ENCODE measurements at regions of chr12 and their contacts with region 1.

Region 1: DNA sequence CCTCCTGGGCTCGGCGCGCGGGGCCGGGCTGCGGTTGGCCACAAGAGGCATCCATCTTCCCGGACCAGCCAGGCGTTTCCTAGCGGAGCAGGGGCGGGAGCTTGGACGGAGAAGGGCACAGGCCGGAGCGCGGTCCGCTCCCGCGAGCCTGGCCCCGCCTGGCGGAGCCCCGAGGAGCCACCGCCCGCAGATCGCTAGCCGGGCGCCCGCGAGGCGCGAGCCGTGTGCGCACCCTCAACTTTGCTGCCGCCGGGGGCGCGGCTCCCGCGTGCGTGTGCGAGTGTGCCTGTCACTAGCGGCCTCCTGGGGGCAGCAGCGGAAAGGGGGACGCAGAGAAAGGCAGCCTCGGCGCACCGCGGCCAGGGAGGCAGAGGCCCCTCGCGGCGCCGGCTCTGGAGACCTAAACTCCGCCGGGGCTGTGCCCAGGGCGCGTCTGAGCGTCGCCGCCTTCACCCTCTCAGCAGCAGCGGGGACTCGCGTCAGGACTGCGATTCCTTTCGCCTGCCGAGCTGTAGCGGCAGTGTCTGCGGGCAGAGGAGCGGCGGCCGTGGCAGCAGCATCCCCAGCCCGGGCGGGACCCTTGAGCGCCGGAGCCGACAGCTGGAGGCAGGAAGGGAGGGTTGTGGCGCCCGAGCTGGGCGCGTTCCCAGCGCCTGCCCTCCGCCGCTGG is 644 bp upstream of the SRGAP1 start:
- DNase-seq: peak; percentile 75 to 96 (median 93)

Region 2: GRCh38 chr12:64019118-64019517 is 175.3 kb after region 1 on chr12:
- intact Hi-C with region 1: no loop called
- DNase-seq: no peak

Region 3: GRCh38 chr12:64039281-64039871 is 195.5 kb after region 1 on chr12:
- intact Hi-C with region 1: loop called (anchors 10 kb)
- DNase-seq: peak in 1 of 42 donors; percentile 14

Region 4: DNA sequence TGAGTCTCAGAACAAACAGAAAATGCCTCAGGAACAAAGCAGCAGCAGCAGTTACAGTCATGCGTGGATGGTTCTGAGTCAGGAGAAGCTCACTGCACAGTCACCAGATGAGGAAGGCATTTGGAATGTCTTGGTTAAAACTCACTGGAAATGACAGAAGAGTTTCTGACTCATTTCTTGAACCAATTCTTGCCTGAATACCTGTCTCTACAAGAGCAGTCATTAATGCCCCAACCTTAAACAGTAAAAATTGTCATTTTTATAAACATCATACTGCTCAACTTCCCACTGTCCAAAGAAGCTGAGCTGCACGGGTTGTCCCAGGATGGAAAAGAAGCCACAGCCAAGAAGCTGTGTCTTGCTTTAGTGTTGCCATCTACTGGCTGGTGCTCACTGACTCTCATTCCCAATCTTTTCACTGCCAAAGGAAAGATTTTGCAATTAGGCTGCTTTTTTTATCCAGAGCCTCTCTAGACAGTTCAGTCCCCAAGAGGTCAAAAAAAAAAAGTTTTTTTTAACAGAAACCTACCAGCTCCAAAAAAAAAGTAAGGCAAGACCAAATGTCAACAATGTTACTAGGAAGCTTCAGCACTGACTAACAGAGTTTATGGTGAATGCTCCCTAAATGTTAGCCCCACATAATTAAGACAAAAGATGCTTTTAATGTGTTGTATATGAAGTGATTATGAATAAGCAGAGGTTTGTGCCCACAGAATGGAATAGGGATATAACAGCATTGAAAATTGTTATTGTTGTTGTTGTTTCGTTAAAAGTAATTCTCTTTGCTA is 337.8 kb after region 1 on chr12:
- intact Hi-C with region 1: loop called (anchors 5 kb)
- DNase-seq: peak in 40 of 42 donors; percentile 34 to 84 (median 66)

Region 5: DNA sequence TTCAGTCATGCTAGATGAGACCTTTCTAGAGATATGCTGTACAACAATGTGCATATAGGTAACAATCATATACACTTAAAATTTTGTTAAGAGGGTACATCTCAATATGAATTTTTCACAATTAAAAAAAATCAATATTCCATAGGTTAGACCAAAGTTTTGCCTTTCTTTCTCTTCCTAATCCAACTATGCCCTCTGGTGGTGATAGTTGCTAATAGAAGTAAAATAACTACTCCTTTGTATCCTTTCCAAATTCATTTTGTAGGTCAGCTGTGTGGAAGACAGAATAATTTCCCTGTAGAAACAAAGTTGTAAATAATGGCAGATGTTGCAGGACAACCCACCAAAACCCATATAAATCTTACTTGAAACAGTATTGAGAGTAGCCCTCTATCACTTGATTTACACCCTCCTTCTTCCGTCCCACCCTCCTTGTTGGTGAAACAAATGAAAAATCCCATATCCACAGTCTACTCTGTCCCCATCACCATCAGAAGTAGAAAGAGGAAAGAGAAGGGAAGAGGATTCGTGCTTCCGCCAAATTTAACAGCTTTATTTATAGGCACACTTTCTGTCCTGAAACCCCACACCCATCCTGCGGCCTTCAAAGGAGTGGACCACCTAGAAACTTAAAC is 412.4 kb after region 1 on chr12:
- intact Hi-C with region 1: loop called (anchors 5 kb)
- DNase-seq: peak in 5 of 42 donors; percentile 25 to 65 (median 41)

Region 6: GRCh38 chr12:64403707-64404469 is 560.0 kb after region 1 on chr12 and contains the start of gene XPOT:
- intact Hi-C with region 1: loop called (anchors 10 kb)
- DNase-seq: peak; percentile 85 to 96 (median 93)

Region 7: DNA sequence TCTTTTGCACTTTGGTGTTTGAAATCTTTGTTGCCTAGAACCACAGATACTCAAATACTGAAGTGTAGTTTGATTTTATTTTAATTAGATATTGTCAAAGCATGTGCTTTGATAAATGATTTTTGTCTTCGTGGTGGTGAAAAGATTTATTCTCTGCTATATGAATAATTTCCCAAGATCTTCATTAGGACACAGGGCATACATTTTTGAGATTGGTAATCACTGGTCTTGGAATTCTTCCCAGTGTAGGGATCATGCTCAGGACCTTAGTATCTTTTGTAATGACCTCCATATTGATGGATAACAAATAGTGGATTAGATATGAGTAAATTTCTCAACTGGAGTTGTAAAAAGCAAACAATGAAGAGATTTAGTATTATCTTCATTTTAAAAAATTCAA is 636.3 kb after region 1 on chr12:
- intact Hi-C with region 1: no loop called
- DNase-seq: no peak

Measured in head of caudate nucleus (tissue), 42 donors.